OCI-LY7 (cell line): ENCODE measurements at regions of chr7 and their contacts with region 1.

Region 1: GRCh38 chr7:70406186-70406949 is 725.6 kb upstream of the GALNT17 start:
- DNase-seq: peak; percentile 52
- H3K4me3 ChIP-seq: peak overlapping the region; percentile 20
- H3K27ac ChIP-seq: peak overlapping the region; percentile 91
- H3K4me1 ChIP-seq: peaks cover 92% of the 10 kb centered on the region
- CTCF ChIP-seq: no peak

Region 2: DNA sequence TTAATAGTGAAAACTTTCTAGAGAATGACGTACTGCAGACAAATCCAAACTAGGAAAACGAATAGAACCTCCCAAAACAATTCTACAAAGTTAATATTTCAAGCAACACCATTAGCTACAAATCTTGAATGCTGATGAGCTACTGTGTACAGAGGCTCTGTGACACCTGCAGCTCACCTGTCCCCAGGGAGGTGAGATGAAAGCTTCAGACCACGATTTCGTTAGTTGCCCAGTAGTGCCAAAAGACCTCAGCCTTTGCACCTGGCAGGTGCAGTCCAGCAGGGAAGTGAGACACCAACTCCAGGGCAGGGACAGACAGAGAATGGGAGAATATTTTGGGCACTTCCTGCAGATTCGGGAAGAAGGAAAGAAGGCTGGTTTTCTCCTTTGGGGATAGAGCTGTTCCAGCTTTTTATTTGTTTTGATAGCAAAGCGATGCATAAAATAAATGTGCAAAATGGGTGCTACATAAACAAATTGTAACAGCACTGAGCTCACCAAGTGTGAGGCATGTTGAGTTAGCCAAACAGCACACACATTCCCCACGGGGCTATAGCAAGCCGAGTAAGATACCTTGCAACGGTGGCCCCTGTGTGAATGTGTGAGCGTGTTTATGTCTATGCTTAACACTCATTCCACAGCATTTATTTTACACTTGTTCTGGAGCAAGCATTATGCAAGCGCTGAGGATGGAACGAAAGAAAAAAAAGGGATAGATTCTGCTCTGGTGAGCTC is 1832.9 kb before region 1 on chr7:
- CTCF ChIA-PET with region 1: no interaction called
- POLR2A ChIA-PET with region 1: no interaction called
- intact Hi-C with region 1: loop called (anchors 2 kb)
- DNase-seq: peak; percentile 98
- H3K4me3 ChIP-seq: peak overlapping the region; percentile 48
- H3K27ac ChIP-seq: peak overlapping the region; percentile 96
- H3K4me1 ChIP-seq: peaks cover 68% of the 10 kb centered on the region
- CTCF ChIP-seq: no peak

Region 3: GRCh38 chr7:70082099-70082611 is 324.2 kb before region 1 on chr7:
- CTCF ChIA-PET with region 1: no interaction called
- POLR2A ChIA-PET with region 1: no interaction called
- intact Hi-C with region 1: no loop called
- DNase-seq: no peak
- H3K4me3 ChIP-seq: no peak overlapping the region
- H3K27ac ChIP-seq: no peak overlapping the region
- H3K4me1 ChIP-seq: no peaks in the 10 kb centered on the region
- CTCF ChIP-seq: no peak

Region 4: DNA sequence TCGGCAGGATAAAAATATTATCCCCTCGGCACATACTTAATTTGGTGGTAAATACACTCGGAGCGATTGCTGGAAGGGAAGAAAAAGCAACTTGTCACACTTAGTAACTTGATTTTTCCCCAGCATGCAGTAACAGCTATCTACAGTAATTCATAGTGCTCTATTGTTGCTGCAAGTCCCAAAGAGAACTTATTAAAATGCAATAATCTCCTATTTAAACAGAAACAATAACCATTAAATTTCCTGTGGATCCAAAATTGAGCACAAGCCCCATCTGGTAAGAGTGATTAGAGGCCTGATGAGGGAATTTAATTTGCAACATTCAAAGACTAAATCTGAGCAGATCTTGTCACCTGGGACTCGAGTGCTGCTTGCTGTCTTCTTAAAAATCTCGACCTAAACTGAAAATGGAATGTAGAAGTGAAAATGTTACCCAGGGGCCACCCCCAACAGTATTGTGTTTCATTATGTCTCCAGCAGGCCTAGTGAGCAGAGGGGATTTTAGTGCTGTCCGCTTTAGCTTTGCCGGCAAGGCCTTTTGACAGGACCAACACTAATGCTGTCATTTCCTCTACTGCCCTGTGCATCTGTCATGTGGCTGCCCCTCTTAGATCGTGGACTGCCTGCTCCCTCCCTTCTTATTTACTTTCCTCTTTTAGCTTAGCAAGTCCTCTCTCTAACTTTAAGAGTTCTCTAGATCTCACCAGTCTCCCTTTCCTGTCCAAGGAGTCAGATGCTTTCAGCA is 168.4 kb before region 1 on chr7:
- CTCF ChIA-PET with region 1: no interaction called
- POLR2A ChIA-PET with region 1: interaction called, 4 read pairs
- intact Hi-C with region 1: loop called (anchors 2 kb)
- DNase-seq: peak; percentile 79
- H3K4me3 ChIP-seq: peak overlapping the region; percentile 1
- H3K27ac ChIP-seq: peak overlapping the region; percentile 72
- H3K4me1 ChIP-seq: peaks cover 22% of the 10 kb centered on the region
- CTCF ChIP-seq: no peak

Region 5: GRCh38 chr7:70417141-70417655 is 10.8 kb after region 1 on chr7:
- CTCF ChIA-PET with region 1: interaction called, 4 read pairs
- POLR2A ChIA-PET with region 1: interaction called, 21 read pairs
- intact Hi-C with region 1: no loop called
- DNase-seq: peak; percentile 54
- H3K4me3 ChIP-seq: peak overlapping the region; percentile 6
- H3K27ac ChIP-seq: peak overlapping the region; percentile 36
- H3K4me1 ChIP-seq: peaks cover 70% of the 10 kb centered on the region
- CTCF ChIP-seq: peak; percentile 48

Region 6: GRCh38 chr7:70426249-70426880 is 20.0 kb after region 1 on chr7:
- CTCF ChIA-PET with region 1: no interaction called
- POLR2A ChIA-PET with region 1: interaction called, 56 read pairs
- intact Hi-C with region 1: loop called (anchors 1 kb)
- DNase-seq: peak; percentile 90
- H3K4me3 ChIP-seq: peak overlapping the region; percentile 46
- H3K27ac ChIP-seq: peak overlapping the region; percentile 91
- H3K4me1 ChIP-seq: peaks cover 57% of the 10 kb centered on the region
- CTCF ChIP-seq: no peak

Region 7: GRCh38 chr7:70456719-70457118 is 50.4 kb after region 1 on chr7:
- CTCF ChIA-PET with region 1: interaction called, 3 read pairs
- POLR2A ChIA-PET with region 1: interaction called, 6 read pairs
- intact Hi-C with region 1: loop called (anchors 1 kb)
- DNase-seq: peak; percentile 96
- H3K4me3 ChIP-seq: peak overlapping the region; percentile 41
- H3K27ac ChIP-seq: peak overlapping the region; percentile 95
- H3K4me1 ChIP-seq: peaks cover 54% of the 10 kb centered on the region
- CTCF ChIP-seq: no peak

Region 8: GRCh38 chr7:70805360-70805759 is 399.0 kb after region 1 on chr7:
- CTCF ChIA-PET with region 1: no interaction called
- POLR2A ChIA-PET with region 1: interaction called, 3 read pairs
- intact Hi-C with region 1: loop called (anchors 5 kb)
- DNase-seq: peak; percentile 59
- H3K4me3 ChIP-seq: peak overlapping the region; percentile 50
- H3K27ac ChIP-seq: peak overlapping the region; percentile 42
- H3K4me1 ChIP-seq: peaks cover 42% of the 10 kb centered on the region
- CTCF ChIP-seq: no peak